Breast epithelium (tissue), 4 donors: ENCODE measurements at regions of chr15 and their contacts with region 1.

Region 1: DNA sequence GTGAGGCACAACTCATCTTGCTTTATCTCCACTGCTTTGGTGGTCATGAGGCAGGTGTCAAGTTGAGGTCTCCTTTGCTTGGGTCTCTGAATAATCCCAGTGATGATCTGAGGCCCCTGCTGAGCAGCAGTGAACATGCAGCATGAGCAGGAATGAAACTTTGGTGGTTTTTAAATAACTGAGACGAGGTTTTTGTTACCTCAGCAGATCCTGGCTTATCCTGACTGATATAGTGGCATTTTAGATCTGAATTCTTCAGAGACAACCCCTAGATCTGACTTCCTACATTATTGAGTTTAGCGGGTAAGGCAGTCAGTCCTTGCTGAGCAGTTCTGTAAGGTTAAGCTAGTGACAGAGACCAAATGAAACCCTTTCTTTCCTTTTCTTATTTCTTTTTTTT is 230.4 kb downstream of the ARRDC4 start:
- DNase-seq: no peak
- H3K4me3 ChIP-seq: no peak overlapping the region
- H3K27ac ChIP-seq: no peak overlapping the region
- H3K4me1 ChIP-seq: no peaks in the 10 kb centered on the region
- H3K27me3 ChIP-seq: peaks cover 0 to 3% of the 10 kb centered on the region in 2 donors
- CTCF ChIP-seq: no peak
- POLR2A ChIP-seq: no peak

Region 2: DNA sequence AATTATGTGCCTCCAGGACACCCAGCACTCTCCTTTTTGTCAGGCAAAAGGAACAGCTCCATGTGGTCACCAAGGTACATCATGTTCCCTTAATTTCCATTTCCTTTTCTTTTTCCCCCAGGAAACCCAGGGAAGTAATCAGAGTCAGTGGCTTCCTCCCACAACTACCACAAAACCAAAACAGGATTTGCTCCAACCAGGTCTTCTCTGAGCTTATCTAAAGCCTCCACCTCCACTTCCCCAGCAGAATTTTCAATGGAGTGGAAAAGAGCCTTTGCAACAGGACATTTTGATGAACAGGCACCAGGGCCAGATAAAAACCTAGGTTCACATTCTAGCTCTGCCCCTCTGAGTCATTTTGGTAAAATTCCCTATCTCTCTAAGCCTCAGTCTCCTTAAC is 1706.1 kb before region 1 on chr15:
- intact Hi-C with region 1: loop called (anchors 5 kb)
- DNase-seq: no peak
- H3K4me3 ChIP-seq: no peak overlapping the region
- H3K27ac ChIP-seq: no peak overlapping the region
- H3K4me1 ChIP-seq: no peaks in the 10 kb centered on the region
- H3K27me3 ChIP-seq: no peaks in the 10 kb centered on the region
- CTCF ChIP-seq: no peak
- POLR2A ChIP-seq: no peak

Region 3: GRCh38 chr15:98123834-98124474 is 67.0 kb before region 1 on chr15:
- intact Hi-C with region 1: no loop called
- DNase-seq: no peak
- H3K4me3 ChIP-seq: no peak overlapping the region
- H3K27ac ChIP-seq: no peak overlapping the region
- H3K4me1 ChIP-seq: no peaks in the 10 kb centered on the region
- H3K27me3 ChIP-seq: no peaks in the 10 kb centered on the region
- CTCF ChIP-seq: no peak
- POLR2A ChIP-seq: no peak